Kidney (tissue), 22 donors: ENCODE measurements at regions of chr15 and their contacts with region 1.

Region 1: GRCh38 chr15:62089616-62090015 is 22.8 kb downstream of the C2CD4A start:
- DNase-seq: no peak
- H3K4me3 ChIP-seq: no peak overlapping the region
- H3K27ac ChIP-seq: no peak overlapping the region
- H3K4me1 ChIP-seq: peaks cover 0 to 7% (median 0%) of the 10 kb centered on the region in 3 donors
- H3K27me3 ChIP-seq: no peaks in the 10 kb centered on the region
- CTCF ChIP-seq: no peak

Region 2: GRCh38 chr15:62150445-62150844 is 60.8 kb after region 1 on chr15:
- intact Hi-C with region 1: loop called (anchors 5 kb)
- DNase-seq: no peak
- H3K4me3 ChIP-seq: no peak overlapping the region
- H3K27ac ChIP-seq: no peak overlapping the region
- H3K4me1 ChIP-seq: no peaks in the 10 kb centered on the region
- H3K27me3 ChIP-seq: no peaks in the 10 kb centered on the region
- CTCF ChIP-seq: no peak